Uterus (tissue), 4 donors: ENCODE measurements at regions of chr2 and their contacts with region 1.

Region 1: GRCh38 chr2:240143801-240144648 is 3.6 kb upstream of the OTOS start:
- DNase-seq: peak; percentile 54 to 73
- H3K4me3 ChIP-seq: no peak overlapping the region
- H3K27ac ChIP-seq: no peak overlapping the region
- H3K4me1 ChIP-seq: peaks cover 0 to 4% of the 10 kb centered on the region in 2 donors
- H3K27me3 ChIP-seq: no peaks in the 10 kb centered on the region
- CTCF ChIP-seq: peak; percentile 88 to 97 (median 92)
- POLR2A ChIP-seq: no peak

Region 2: DNA sequence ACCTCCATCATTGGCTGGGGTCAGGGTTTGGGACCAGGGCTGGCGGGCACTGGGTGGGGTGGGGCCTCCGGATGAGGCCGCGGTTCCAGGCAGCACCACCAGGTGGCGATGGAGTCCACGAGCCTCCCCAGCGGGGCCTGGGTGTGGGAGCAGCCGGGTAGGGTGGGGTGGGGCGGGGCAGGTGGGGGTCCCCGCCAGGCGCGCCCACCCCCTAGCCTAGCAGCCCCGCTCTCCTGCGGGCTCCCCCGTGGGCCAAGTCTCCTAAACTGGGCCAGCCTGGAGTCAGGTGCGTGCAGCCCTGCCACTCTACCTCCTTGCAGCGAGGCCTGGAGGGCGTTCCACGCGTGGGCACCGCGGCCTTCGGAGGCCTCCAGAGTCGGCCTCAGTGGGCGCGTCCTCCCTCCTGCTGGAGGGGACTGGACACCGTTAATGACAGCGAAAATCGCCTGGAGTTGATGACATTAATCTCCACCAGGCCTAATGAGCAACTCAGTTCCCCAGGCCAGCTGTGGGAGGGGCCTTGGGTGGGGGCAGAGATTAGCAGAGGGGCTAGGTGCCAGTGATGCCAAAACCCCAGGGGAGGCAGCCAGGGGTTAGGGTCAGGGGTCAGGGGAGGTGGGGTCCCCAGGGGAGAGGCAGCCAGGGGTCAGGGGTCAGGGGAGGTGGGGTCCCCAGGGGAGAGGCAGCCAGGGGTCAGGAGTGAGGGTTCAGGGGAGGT is 1108.5 kb before region 1 on chr2:
- intact Hi-C with region 1: loop called (anchors 10 kb)
- DNase-seq: peak in 1 of 2 donors; percentile 62
- H3K4me3 ChIP-seq: no peak overlapping the region
- H3K27ac ChIP-seq: no peak overlapping the region
- H3K4me1 ChIP-seq: no peaks in the 10 kb centered on the region
- H3K27me3 ChIP-seq: no peaks in the 10 kb centered on the region
- CTCF ChIP-seq: peak; percentile 63 to 99 (median 82)
- POLR2A ChIP-seq: no peak

Region 3: DNA sequence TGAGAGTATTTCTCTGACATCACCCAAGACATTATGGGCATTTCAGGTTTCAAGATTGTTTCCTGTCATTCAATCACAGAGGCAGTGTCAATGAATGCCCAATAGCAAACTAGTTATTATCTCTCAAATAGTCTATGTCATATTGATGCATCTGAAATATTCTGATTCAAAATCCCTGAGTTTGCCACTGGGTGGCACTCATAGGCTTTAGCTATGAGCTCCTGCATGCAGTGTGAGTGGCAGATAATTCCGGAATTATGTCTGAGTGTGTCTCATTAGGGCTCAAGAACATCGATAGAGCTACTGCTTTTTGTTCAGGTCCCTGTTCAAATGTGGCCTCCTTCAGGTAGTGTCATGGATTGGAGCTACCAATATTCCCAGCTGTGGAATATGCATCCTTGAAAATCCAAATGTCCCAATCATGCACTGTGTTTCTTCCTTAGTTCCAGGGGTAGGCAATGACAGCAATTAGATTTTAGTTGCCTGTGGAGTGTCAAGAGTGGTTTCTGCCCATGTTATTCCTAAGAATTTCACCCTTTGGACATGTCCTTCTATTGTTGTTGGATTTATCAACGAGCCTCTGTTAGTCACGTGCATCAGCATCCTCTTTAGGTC is 82.9 kb before region 1 on chr2:
- intact Hi-C with region 1: loop called (anchors 10 kb)
- DNase-seq: no peak
- H3K4me3 ChIP-seq: no peak overlapping the region
- H3K27ac ChIP-seq: no peak overlapping the region
- H3K4me1 ChIP-seq: no peaks in the 10 kb centered on the region
- H3K27me3 ChIP-seq: no peaks in the 10 kb centered on the region
- CTCF ChIP-seq: peak; percentile 36 to 69 (median 45)
- POLR2A ChIP-seq: no peak